ENCODE measurements at regions of chr1 and their contacts with region 1.

Region 1: DNA sequence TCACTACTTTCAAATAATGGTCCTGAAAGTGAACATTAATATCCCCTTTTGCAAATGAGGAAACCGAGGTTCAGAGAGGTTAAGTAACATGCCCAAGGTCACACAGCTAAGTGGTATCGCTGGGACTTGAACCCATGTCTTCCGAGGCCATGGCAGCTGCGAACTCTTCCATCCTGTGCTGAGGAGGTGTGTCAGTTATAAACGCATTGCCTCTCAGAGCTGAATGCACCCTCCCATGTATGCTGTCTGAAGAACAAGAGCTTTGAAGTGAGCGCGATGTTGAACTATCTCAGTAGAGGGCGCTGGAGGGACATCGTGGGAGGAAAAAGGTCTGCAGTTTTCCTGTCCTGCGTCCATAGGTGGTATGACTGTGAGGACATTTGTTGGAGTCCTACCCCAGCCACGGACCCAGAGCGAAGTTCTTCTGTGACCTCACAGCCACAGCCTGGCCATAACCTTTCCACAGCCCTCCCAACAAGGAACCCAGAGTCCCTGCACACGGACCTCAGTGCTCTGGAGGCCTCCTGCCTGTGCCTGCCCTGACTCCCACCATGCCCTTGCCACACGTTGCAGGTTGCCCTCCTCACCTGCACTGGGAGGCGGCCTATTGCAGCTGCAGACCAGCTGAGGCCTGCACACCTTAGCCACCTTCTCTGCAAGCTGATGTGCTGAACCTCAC is 7.5 kb downstream of the MYOC start:
- DNase-seq: peak; percentile 94
- H3K4me3 Mint-ChIP-seq: no peak overlapping the region
- H3K27ac Mint-ChIP-seq: no peak overlapping the region
- H3K4me1 Mint-ChIP-seq: no peaks in the 10 kb centered on the region
- H3K27me3 Mint-ChIP-seq: no peaks in the 10 kb centered on the region
- CTCF ChIP-seq: peak; percentile 74

Region 2: DNA sequence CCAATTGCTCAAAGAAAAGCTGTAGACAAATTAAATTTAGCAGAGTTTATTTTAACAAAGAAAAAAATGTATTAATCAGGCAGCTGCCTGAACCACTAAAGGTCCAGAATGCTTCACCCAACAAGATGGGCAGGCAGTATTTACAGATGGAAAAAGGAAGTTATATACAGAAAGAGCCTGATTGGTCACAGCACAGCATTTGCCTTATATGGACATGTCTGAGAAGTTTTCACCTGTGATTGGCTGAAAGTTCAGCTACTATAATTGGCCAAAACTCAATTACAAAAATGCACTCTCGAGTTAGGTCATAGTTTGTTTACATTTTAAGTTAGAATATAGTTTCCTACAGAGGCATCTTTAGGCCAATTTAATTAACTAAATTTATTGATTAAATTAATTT is 411.8 kb before region 1 on chr1:
- CTCF ChIA-PET with region 1: no interaction called
- POLR2A ChIA-PET with region 1: no interaction called
- intact Hi-C with region 1: no loop called
- DNase-seq: no peak
- H3K4me3 Mint-ChIP-seq: no peak overlapping the region
- H3K27ac Mint-ChIP-seq: no peak overlapping the region
- H3K4me1 Mint-ChIP-seq: no peaks in the 10 kb centered on the region
- H3K27me3 Mint-ChIP-seq: no peaks in the 10 kb centered on the region
- CTCF ChIP-seq: no peak

Region 3: GRCh38 chr1:171627020-171627419 is 17.9 kb before region 1 on chr1:
- CTCF ChIA-PET with region 1: interaction called, 28 read pairs
- POLR2A ChIA-PET with region 1: no interaction called
- intact Hi-C with region 1: no loop called
- DNase-seq: no peak
- H3K4me3 Mint-ChIP-seq: no peak overlapping the region
- H3K27ac Mint-ChIP-seq: no peak overlapping the region
- H3K4me1 Mint-ChIP-seq: no peaks in the 10 kb centered on the region
- H3K27me3 Mint-ChIP-seq: peaks cover 24% of the 10 kb centered on the region
- CTCF ChIP-seq: no peak

Region 4: DNA sequence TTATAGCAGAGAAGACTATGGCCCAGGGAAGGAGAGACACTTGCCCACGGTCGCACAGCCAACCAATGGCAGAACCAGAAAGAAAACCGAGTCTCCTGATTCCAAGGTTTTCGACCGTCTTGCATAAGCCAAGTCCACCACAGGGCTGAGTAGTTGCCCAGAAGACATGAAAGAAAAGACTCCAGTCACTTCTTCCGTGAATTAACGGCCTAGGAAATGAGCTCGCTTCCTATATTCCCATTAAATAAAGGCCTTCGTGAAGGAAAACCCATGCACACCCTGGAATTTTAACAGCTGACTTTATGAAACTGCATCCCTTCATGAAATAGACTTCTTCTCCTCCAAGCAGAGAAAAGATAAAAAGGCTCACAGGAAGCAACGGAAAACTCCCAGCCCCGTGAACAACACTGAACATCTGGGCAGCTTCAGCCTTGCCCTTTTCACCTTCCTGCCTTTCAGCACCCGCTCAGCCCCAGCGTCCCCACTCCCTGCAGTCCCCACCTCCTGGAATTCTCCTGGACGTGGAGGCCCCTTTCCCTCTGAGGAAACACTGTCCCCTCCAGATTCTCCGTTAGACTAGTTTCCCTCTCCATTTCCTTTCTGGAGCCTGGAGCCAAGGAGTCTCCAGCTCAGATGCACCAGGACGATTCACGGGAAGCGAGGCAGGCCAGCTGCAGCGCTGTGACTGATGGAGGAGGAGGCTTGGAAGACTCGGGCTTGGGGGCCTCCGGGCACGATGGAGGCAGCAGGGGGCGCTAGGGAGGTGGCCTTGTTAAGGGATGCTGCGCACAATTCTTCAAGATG is 10.2 kb after region 1 on chr1:
- CTCF ChIA-PET with region 1: interaction called, 33 read pairs
- POLR2A ChIA-PET with region 1: interaction called, 5 read pairs
- intact Hi-C with region 1: no loop called
- DNase-seq: peak; percentile 44
- H3K4me3 Mint-ChIP-seq: no peak overlapping the region
- H3K27ac Mint-ChIP-seq: no peak overlapping the region
- H3K4me1 Mint-ChIP-seq: no peaks in the 10 kb centered on the region
- H3K27me3 Mint-ChIP-seq: peaks cover 21% of the 10 kb centered on the region
- CTCF ChIP-seq: peak; percentile 41

Region 5: GRCh38 chr1:171664976-171665375 is 20.0 kb after region 1 on chr1:
- CTCF ChIA-PET with region 1: interaction called, 20 read pairs
- POLR2A ChIA-PET with region 1: no interaction called
- intact Hi-C with region 1: no loop called
- DNase-seq: no peak
- H3K4me3 Mint-ChIP-seq: no peak overlapping the region
- H3K27ac Mint-ChIP-seq: no peak overlapping the region
- H3K4me1 Mint-ChIP-seq: no peaks in the 10 kb centered on the region
- H3K27me3 Mint-ChIP-seq: no peaks in the 10 kb centered on the region
- CTCF ChIP-seq: no peak

Region 6: GRCh38 chr1:171715813-171716251 is 70.9 kb after region 1 on chr1:
- CTCF ChIA-PET with region 1: interaction called, 69 read pairs
- POLR2A ChIA-PET with region 1: no interaction called
- intact Hi-C with region 1: loop called (anchors 1 kb)
- DNase-seq: peak; percentile 18
- H3K4me3 Mint-ChIP-seq: no peak overlapping the region
- H3K27ac Mint-ChIP-seq: no peak overlapping the region
- H3K4me1 Mint-ChIP-seq: peaks cover 6% of the 10 kb centered on the region
- H3K27me3 Mint-ChIP-seq: no peaks in the 10 kb centered on the region
- CTCF ChIP-seq: peak; percentile 44

Measured in MCF 10A (cell line).